Heart left ventricle (tissue), 16 donors: ENCODE measurements at regions of chr5 and their contacts with region 1.

Region 1: GRCh38 chr5:148864113-148864841 is 37.9 kb downstream of the ADRB2 start:
- DNase-seq: peak in 3 of 5 donors; percentile 30 to 59 (median 37)
- ATAC-seq: peak; percentile 72 to 88 (median 86)
- H3K4me3 ChIP-seq: no peak overlapping the region
- H3K27ac ChIP-seq: peak overlapping the region; percentile 7 to 83 (median 68)
- H3K4me1 ChIP-seq: peaks cover 0 to 24% (median 16%) of the 10 kb centered on the region in 12 donors
- H3K27me3 ChIP-seq: no peaks in the 10 kb centered on the region
- CTCF ChIP-seq: peak in 2 of 12 donors; percentile 3 to 25
- POLR2A ChIP-seq: no peak

Region 2: DNA sequence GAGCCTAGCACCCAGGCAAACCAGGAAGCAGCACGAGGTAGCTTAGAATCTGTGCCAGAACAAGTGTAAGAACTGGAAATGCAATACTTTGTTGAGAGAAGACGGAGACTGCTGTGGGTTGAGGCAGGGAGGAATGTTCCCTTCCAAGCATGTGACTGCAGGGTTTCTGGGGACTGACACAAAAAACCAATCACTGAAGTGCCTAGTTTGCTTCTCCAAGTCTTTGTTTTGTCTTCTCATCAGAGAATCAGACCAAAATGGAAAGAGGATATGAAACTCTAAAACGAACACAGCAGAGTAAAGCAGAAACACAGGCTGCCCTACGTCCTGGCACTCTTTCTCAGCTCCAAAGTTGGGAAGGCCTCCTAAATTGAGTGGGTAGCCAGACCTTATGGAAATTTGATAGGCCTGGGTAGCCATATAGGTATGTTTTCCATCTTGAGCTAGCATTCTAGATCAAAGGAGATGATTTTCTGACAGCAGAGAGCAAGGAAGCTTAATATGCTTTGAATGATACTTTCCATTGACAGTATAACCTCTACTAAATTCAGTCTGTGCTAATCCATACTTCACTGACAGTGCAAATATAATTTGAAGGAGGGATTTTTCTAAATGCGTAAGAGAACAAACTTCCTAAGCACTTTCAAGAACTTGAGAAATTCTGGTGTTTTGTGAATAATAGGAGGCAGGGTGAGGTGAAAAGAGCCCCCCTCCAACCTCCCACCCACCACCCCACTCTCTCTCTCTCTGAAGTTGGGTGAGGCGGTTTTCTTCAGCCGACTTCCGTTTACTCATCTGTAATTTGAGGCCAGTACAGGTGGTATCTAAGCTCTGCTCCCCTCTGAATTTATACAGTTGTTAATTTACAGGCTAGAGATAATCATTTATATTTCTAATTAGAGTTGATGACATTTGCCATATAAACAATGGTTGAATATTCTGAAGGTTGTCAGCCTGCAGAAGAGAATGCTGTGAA is 32.4 kb before region 1 on chr5:
- intact Hi-C with region 1: loop called in 2 of 10 experiments (anchors 2 to 5 kb)
- DNase-seq: no peak
- ATAC-seq: peak in 3 of 4 donors; percentile 7 to 22 (median 19)
- H3K4me3 ChIP-seq: peak overlapping the region in 9 of 12 donors; percentile 55 to 84 (median 66)
- H3K27ac ChIP-seq: peak overlapping the region in 11 of 12 donors; percentile 32 to 88 (median 62)
- H3K4me1 ChIP-seq: peaks cover 4 to 76% (median 44%) of the 10 kb centered on the region in 12 donors
- H3K27me3 ChIP-seq: no peaks in the 10 kb centered on the region
- CTCF ChIP-seq: no peak
- POLR2A ChIP-seq: no peak

Region 3: GRCh38 chr5:148904440-148904839 is 40.2 kb after region 1 on chr5:
- intact Hi-C with region 1: loop called in 1 of 10 experiments (anchors 5 kb)
- DNase-seq: peak; percentile 35 to 83 (median 67)
- ATAC-seq: peak; percentile 94 to 96 (median 96)
- H3K4me3 ChIP-seq: no peak overlapping the region
- H3K27ac ChIP-seq: peak overlapping the region in 10 of 12 donors; percentile 44 to 79 (median 64)
- H3K4me1 ChIP-seq: peaks cover 0 to 19% (median 5%) of the 10 kb centered on the region in 12 donors
- H3K27me3 ChIP-seq: no peaks in the 10 kb centered on the region
- CTCF ChIP-seq: no peak
- POLR2A ChIP-seq: no peak